AG04449 (cell line): ENCODE measurements at regions of chr2 and their contacts with region 1.

Region 1: DNA sequence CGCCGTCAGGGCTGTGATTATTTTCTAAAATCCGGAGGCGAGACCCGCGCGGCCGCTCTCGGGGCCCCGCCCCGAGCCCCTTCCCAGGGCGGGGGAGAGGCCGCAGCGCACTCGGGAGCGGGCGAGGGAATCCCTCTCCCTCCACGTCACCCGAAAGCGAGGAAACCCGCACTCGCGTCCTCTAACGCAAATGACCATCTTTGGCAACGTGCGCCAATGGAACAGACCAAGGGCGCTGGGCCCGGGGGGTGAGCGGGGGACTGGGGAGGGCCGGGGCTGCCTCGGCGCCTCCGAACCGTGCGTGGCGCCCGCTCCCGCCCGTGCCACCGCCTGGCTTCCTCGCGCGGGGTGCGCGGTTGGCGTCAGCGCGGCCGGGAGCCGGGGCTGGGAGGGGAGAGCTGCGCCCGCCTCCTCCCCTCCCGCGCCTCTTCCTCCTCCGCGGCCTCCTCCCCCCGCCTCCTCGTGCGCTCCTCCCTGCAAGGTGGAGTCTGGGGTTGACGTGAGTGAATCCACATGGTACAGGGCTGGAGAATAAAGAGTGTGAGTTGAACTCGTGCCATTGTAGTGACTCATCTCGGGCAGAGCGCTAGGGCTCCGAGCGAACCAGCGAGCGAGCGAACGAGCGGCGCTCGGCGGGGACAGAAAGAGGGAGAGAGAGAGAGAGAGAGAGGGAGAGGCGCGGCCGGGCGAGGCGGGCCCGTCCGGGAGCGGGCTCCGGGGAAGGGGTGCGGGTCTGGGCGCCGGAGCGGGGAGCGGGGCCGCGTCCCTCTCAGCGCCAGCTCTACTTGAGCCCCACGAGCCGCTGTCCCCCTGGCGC is at the start of gene FOSL2:
- DNase-seq: peak; percentile 99
- H3K4me3 ChIP-seq: peak within 1 kb of the TSS; percentile 91
- CTCF ChIP-seq: no peak

Region 2: GRCh38 chr2:27798948-27799645 is 593.4 kb before region 1 on chr2:
- CTCF ChIA-PET with region 1: no interaction called
- POLR2A ChIA-PET with region 1: interaction called, 10 read pairs
- DNase-seq: peak; percentile 100
- H3K4me3 ChIP-seq: no peak overlapping the region
- CTCF ChIP-seq: no peak

Region 3: GRCh38 chr2:28423856-28424605 is 31.5 kb after region 1 on chr2:
- CTCF ChIA-PET with region 1: no interaction called
- POLR2A ChIA-PET with region 1: no interaction called
- DNase-seq: no peak
- H3K4me3 ChIP-seq: no peak overlapping the region
- CTCF ChIP-seq: no peak

Region 4: GRCh38 chr2:28736034-28736433 is 343.5 kb after region 1 on chr2:
- CTCF ChIA-PET with region 1: no interaction called
- POLR2A ChIA-PET with region 1: no interaction called
- DNase-seq: no peak
- H3K4me3 ChIP-seq: no peak overlapping the region
- CTCF ChIP-seq: no peak